Endothelial cell of umbilical vein (primary cell): ENCODE measurements at regions of chr3 and their contacts with region 1.

Region 1: GRCh38 chr3:127172781-127173515 is 20.0 kb upstream of the PRR23E start:
- DNase-seq: peak; percentile 36
- H3K4me3 ChIP-seq: no peak overlapping the region
- H3K27ac ChIP-seq: no peak overlapping the region
- H3K4me1 ChIP-seq: peaks cover 5% of the 10 kb centered on the region
- H3K27me3 ChIP-seq: no peaks in the 10 kb centered on the region
- CTCF ChIP-seq: no peak
- POLR2A ChIP-seq: no peak

Region 2: DNA sequence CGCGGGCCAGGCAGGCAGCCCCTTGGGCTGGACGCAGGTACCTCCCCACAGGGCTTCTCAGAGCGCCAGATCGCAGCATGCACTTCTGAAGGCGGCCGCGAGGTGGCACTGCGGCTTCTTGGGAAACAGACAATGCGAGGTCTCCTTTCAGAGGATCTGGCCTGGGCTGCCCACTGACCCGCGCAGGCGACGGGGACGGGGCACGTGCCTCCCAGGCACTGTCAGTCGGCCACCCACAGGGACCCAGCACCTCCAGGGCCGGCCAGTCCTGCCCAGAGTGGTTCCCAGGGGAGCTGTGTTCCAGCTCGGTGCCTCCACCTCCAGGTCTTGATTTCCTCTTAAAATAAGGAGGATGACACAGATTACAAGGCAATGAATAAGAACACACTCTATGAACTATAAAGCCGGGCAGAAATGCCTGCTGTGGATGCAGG is 493.6 kb before region 1 on chr3:
- CTCF ChIA-PET with region 1: no interaction called
- POLR2A ChIA-PET with region 1: no interaction called
- dilution Hi-C with region 1: no loop called
- intact Hi-C with region 1: loop called (anchors 10 kb)
- DNase-seq: peak; percentile 76
- H3K4me3 ChIP-seq: no peak overlapping the region
- H3K27ac ChIP-seq: no peak overlapping the region
- H3K4me1 ChIP-seq: no peaks in the 10 kb centered on the region
- H3K27me3 ChIP-seq: peaks cover 6 to 26% of the 10 kb centered on the region in 2 experiments
- CTCF ChIP-seq: peak; percentile 91 to 97
- POLR2A ChIP-seq: no peak

Region 3: GRCh38 chr3:127074728-127075360 is 98.1 kb before region 1 on chr3:
- CTCF ChIA-PET with region 1: no interaction called
- POLR2A ChIA-PET with region 1: no interaction called
- dilution Hi-C with region 1: no loop called
- intact Hi-C with region 1: no loop called
- DNase-seq: no peak
- H3K4me3 ChIP-seq: no peak overlapping the region
- H3K27ac ChIP-seq: no peak overlapping the region
- H3K4me1 ChIP-seq: no peaks in the 10 kb centered on the region
- H3K27me3 ChIP-seq: no peaks in the 10 kb centered on the region
- CTCF ChIP-seq: no peak
- POLR2A ChIP-seq: no peak